ENCODE measurements at regions of chr19 and their contacts with region 1.

Region 1: GRCh38 chr19:49685781-49686332 is 3.5 kb upstream of the ADM5 start:
- DNase-seq: no peak
- ATAC-seq: no peak
- H3K4me3 ChIP-seq: no peak overlapping the region
- H3K27ac ChIP-seq: no peak overlapping the region
- H3K4me1 ChIP-seq: 0 out of 2 replicates have a peak, but pooled peaks cover 6% of the 10 kb centered on the region
- H3K27me3 ChIP-seq: no peaks in the 10 kb centered on the region
- CTCF ChIP-seq: no peak

Region 2: DNA sequence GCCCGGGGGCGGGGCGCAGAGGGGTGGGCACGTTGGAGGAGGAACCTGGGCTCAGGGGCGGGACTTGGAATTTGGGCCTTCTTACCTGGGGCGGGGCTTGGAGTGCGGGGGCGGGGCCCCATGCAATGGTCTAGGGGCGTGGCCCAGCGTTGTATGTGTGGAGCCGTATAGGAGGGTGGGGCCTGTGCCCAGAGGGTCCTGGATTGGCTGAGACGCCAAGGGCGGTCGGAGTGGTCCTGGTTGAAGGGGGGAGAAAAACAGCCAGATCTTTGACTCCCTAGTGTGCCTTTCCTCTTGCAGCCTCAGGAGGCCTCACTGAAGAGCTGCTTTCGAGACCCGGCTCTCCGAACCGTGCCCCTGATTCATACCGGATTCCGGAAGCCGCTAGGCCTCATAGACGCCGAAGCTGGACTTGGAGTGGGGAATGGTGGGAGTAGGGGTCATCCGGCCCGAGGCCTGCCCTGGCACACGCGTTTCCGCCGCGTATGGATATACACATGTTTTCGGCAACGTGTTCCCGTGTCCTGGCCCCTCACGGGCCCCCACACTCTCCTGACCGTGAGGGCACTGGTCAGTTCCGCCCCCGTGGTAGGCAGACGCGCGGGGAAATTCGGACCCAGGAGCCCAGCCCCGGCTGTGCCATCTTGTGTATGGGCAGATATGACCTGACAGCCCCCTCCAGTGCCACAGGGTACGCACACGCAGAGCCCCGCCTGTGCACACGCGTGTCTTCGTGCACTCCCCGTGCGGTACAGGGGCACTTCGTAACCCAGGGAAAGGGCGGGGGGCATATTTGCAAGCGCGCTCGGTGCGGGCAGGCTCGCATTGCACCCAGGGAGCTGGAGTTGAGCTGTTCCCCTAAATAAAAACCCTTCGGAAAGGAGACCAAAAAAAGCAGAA is 95.5 kb before region 1 on chr19:
- CTCF ChIA-PET with region 1: no interaction called
- POLR2A ChIA-PET with region 1: no interaction called
- in situ Hi-C with region 1: no loop called
- intact Hi-C with region 1: no loop called
- DNase-seq: peak; percentile 56
- ATAC-seq: peak; percentile 87
- H3K4me3 ChIP-seq: peak overlapping the region; percentile 63 to 77
- H3K27ac ChIP-seq: peak overlapping the region; percentile 88
- H3K4me1 ChIP-seq: peaks cover 8% of the 10 kb centered on the region
- H3K27me3 ChIP-seq: no peaks in the 10 kb centered on the region
- CTCF ChIP-seq: no peak

Region 3: DNA sequence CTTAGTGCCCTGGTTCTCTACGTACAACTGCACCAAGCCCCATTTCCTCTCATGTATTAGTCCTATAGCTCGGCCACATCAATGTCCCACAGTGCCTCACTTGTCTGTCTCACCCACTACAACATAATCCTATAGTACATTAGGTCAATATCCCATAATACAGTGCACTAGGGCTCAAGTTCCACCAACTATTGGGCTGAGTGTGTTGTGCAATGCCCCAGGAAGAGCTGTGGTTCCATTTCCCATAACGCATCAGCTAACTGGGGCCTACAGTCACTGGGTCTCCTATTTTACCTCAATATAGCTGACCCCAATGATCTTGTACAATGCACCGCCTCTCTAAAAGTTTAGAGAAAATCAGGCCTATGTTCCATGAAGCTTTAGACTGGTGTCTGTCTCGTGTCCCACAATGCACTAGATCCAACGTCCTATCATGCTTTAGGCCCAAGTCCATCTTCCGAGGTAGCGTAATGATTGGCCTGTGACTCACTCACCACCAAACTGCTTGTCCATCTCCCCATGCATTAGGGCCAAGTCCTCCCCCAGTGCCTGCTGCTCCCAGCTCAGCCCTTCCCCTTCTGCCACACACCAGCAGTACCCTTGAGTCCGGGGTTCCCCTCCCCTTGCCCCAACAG is 55.5 kb after region 1 on chr19:
- CTCF ChIA-PET with region 1: interaction called, 10 read pairs
- POLR2A ChIA-PET with region 1: no interaction called
- in situ Hi-C with region 1: no loop called
- intact Hi-C with region 1: no loop called
- DNase-seq: no peak
- ATAC-seq: no peak
- H3K4me3 ChIP-seq: no peak overlapping the region
- H3K27ac ChIP-seq: no peak overlapping the region
- H3K4me1 ChIP-seq: no peaks in the 10 kb centered on the region
- H3K27me3 ChIP-seq: no peaks in the 10 kb centered on the region
- CTCF ChIP-seq: no peak